T-cell (primary cell): ENCODE measurements at regions of chr7 and their contacts with region 1.

Region 1: DNA sequence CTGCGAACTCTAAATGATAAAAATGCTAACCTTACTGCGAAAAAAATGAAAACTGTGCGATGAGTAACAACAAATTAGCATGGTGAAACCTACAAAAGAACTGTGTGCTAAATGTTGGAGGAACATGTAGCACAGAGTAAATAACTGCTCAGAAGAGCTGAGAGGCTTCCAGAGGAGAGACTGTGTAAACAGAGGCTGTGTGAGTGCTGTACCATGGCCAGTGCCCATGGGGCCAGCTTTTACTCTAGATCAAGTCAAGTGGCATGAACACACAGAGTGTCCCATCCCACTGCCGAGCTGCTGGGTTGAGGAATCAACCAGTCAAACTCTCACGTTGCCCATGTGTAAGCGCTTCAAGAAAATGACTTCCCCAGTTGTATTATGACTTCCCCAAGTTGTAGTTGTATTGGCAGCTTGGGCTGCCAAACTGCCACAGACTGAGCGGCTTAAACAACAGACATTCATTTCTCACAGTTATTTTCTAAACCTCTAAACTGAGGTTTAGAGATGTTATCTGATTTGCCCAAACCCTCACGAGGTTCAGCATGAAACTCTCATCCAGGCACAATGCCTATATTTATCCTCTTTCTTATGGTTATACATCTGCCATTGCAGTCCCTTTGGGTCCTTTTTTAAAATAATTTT is 270.7 kb downstream of the ABCA13 start:
- DNase-seq: no peak
- ATAC-seq: no peak
- H3K4me3 ChIP-seq: no peak overlapping the region
- H3K4me3 Mint-ChIP-seq: no peak overlapping the region
- H3K27ac ChIP-seq: no peak overlapping the region
- H3K27ac Mint-ChIP-seq: no peak overlapping the region
- H3K4me1 ChIP-seq: no peaks in the 10 kb centered on the region
- H3K4me1 Mint-ChIP-seq: peaks cover 0 to 25% (median 6%) of the 10 kb centered on the region in 3 donors
- H3K27me3 ChIP-seq: no peaks in the 10 kb centered on the region
- H3K27me3 Mint-ChIP-seq: no peaks in the 10 kb centered on the region

Region 2: GRCh38 chr7:48458701-48459524 is 16.9 kb after region 1 on chr7:
- CTCF ChIA-PET with region 1: no interaction called
- POLR2A ChIA-PET with region 1: no interaction called
- DNase-seq: no peak
- ATAC-seq: no peak
- H3K4me3 ChIP-seq: no peak overlapping the region
- H3K4me3 Mint-ChIP-seq: no peak overlapping the region
- H3K27ac ChIP-seq: no peak overlapping the region
- H3K27ac Mint-ChIP-seq: no peak overlapping the region
- H3K4me1 ChIP-seq: no peaks in the 10 kb centered on the region
- H3K4me1 Mint-ChIP-seq: no peaks in the 10 kb centered on the region
- H3K27me3 ChIP-seq: no peaks in the 10 kb centered on the region
- H3K27me3 Mint-ChIP-seq: no peaks in the 10 kb centered on the region

Region 3: DNA sequence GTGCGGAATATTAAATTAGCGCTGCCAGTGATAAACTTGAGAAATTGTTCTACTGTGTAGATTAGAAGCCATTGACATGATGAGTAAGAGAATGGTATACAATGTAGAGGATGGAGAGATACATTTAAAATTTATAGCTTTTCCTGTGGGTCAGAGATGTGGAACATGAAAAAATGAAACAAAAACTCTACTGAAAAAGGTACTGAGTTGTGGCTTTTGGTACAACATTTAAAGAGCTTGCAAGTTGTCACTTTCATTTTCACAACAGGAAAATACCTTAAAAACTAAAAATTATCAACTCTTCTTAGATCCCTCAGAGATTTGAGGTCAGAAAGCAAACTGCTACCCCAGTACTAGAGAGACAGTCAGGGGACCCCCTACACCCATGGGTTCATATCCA is 133.5 kb after region 1 on chr7:
- CTCF ChIA-PET with region 1: no interaction called
- POLR2A ChIA-PET with region 1: no interaction called
- DNase-seq: no peak
- ATAC-seq: no peak
- H3K4me3 ChIP-seq: no peak overlapping the region
- H3K4me3 Mint-ChIP-seq: no peak overlapping the region
- H3K27ac ChIP-seq: no peak overlapping the region
- H3K27ac Mint-ChIP-seq: no peak overlapping the region
- H3K4me1 ChIP-seq: no peaks in the 10 kb centered on the region
- H3K4me1 Mint-ChIP-seq: no peaks in the 10 kb centered on the region
- H3K27me3 ChIP-seq: no peaks in the 10 kb centered on the region
- H3K27me3 Mint-ChIP-seq: no peaks in the 10 kb centered on the region

Region 4: DNA sequence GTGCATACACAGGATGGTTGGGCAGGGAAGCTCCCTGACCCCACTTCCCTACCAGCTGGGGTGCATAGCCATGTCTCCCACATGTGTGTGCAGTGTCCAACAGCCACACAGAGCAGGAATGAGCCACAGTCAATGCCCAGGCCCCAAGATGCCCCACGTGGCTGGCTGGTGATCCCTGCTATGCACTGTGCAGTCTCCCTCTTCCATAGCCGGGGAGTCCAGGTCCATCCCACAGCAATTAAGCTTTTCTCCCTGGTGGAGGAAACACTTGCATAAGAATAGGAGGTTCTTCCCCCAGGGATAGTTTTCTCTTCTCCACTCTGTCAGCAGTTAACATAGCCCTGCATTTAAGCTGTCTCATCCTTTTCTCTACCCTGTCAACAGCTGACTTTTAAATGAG is 934.8 kb after region 1 on chr7:
- CTCF ChIA-PET with region 1: no interaction called
- POLR2A ChIA-PET with region 1: interaction called in 1 of 2 experiments, 11 read pairs
- DNase-seq: no peak
- ATAC-seq: no peak
- H3K4me3 ChIP-seq: no peak overlapping the region
- H3K4me3 Mint-ChIP-seq: no peak overlapping the region
- H3K27ac ChIP-seq: no peak overlapping the region
- H3K27ac Mint-ChIP-seq: no peak overlapping the region
- H3K4me1 ChIP-seq: no peaks in the 10 kb centered on the region
- H3K4me1 Mint-ChIP-seq: no peaks in the 10 kb centered on the region
- H3K27me3 ChIP-seq: no peaks in the 10 kb centered on the region
- H3K27me3 Mint-ChIP-seq: no peaks in the 10 kb centered on the region